ENCODE measurements at regions of chr12 and their contacts with region 1.

Region 1: DNA sequence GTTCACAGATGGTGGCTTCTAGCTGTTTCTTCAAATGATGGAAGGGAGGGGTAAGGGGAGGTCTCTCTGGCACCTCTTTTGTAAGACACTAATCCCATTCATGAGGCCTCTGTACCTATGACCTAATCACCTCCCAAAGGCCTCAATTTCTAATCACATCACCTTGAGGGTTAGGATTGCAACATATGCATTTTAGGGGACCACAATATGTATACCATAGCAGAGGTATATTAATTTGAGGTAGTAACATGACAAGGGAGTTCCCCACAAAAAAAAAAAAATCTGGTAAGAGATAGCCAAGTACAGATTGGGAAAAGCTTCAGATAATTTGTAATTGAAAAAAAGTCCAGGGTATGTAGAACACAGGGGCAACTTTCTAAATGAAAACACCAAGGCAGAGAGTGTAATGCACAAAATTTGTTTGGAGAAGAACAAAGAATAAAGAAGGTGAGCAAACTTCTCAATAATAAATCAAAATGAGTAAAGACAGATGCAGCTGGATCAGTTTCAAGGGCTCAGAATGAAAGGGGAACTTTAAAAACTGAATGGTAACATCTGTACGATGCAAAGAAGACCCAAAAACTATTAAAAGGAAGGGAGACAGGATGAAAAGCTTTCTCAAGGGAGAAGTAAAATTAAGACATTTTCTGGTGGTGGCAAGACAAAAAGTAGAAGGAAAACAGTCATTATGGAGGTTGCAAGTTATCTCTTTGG is 125.5 kb upstream of the DCN start:
- DNase-seq: no peak
- ATAC-seq: no peak
- H3K4me3 ChIP-seq: no peak overlapping the region
- H3K4me1 ChIP-seq: no peaks in the 10 kb centered on the region
- CTCF ChIP-seq: no peak

Region 2: DNA sequence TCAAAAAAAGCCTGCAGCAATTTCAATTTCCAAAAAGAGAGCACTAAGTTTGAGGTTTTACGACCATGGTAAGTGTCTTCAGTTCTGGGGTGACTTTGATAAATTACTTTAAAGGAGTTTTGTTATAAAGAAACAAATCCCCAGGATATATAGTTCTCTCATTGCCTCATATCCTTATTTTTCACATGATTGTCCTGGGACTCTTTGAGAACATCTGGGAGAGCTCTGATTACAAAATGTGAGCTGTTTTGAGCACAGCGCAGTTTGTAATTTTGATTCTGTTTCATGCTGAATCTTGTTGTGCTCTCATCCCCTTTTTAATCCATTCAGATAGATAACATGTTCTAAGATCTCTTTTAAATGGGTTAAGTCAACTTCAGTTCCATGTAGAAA is 57.8 kb before region 1 on chr12:
- intact Hi-C with region 1: no loop called
- DNase-seq: no peak
- ATAC-seq: no peak
- H3K4me3 ChIP-seq: no peak overlapping the region
- H3K4me1 ChIP-seq: no peaks in the 10 kb centered on the region
- CTCF ChIP-seq: no peak

Region 3: GRCh38 chr12:91335699-91336098 is 27.6 kb after region 1 on chr12:
- intact Hi-C with region 1: loop called in 1 of 2 experiments (anchors 2 kb)
- DNase-seq: no peak
- ATAC-seq: no peak
- H3K4me3 ChIP-seq: no peak overlapping the region
- H3K4me1 ChIP-seq: no peaks in the 10 kb centered on the region
- CTCF ChIP-seq: no peak